Tibial artery (tissue), 4 donors: ENCODE measurements at regions of chr14 and their contacts with region 1.

Region 1: DNA sequence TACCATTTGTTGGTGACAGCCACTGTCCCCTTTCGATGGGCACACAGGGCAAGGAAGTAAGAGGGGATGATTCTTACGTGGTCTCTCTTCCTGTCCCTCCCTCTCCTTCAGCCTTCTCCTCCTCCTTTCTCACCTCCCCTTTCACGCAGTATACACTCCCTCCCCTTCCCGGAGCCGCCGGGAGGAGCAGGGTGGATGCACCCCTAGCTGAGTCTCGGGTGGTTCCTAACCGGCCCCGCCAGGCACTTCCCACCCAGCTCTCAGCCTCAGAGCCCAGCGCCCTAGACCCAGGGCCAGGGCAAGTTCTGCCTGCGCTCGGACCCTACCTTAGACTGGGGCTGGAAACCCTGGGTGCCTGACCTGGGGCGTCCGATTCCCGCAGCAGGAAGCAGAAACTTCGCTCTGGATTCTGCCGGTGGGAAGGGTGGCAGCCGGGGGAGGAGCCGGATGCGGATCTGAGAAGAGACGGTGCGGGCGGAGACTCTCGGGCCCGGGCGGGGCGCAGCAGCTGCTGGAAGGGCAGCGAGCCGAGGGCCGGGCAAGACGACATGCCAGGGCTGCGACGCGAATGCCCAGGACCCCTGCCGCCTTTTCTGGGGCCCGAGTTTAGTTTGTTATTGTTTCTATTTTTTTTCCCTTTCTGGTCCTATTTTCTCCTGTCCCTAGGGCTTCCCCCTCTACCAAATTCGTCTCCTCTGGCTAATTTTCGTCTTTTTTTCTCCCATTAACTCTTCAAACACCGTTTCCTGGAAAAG is at the start of gene TEP1:
- DNase-seq: peak; percentile 92 to 94
- H3K4me3 ChIP-seq: peak within 1 kb of the TSS; percentile 75 to 91
- H3K27ac ChIP-seq: peak within 1 kb of the TSS; percentile 94
- H3K4me1 ChIP-seq: peaks cover 0 to 19% (median 12%) of the 10 kb centered on the region in 4 donors
- H3K27me3 ChIP-seq: no peaks in the 10 kb centered on the region
- CTCF ChIP-seq: peak in 1 of 2 experiments; percentile 8

Region 2: DNA sequence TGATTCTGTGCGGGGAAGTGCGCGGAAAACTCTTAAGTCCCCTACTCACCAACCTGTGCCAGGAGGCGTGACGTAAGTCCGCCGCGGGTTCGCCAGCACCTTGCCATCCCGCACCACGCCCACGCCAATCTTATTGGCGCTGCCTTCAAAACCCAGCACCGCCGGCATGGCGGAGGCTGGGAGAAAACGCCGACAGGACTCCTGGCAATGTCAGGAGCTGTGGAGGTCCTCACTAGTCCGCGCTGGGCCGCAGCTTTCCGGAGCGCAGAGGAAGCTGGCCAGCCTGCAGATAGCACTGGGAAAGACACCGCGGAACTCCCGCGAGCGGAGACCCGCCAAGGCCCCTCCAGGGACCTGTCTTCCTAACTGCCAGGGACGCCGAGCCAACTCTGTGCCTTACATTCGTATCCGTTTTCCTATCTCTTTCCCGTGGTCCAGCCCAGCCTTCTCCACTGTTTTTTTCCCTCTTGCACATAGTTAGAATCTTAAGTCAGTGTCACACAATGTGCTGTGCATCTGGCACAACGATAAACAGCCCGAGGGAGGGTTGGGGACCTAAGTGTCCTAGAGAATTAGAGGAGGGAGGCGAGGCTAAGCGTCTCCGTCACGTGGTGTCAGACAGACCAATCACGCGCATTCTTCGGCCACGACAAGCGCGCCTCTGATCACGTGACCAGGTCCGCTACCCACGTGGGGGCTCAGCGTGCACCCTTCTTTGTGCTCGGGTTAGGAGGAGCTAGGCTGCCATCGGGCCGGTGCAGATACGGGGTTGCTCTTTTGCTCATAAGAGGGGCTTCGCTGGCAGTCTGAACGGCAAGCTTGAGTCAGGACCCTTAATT is 41.5 kb after region 1 on chr14 and contains the starts of genes APEX1 and OSGEP:
- intact Hi-C with region 1: loop called (anchors 5 kb)
- DNase-seq: peak; percentile 99
- H3K4me3 ChIP-seq: peak within 1 kb of the TSS; percentile 71 to 72
- H3K27ac ChIP-seq: peak within 1 kb of the TSS; percentile 84 to 93
- H3K4me1 ChIP-seq: peaks cover 0 to 40% (median 29%) of the 10 kb centered on the region in 4 donors
- H3K27me3 ChIP-seq: no peaks in the 10 kb centered on the region
- CTCF ChIP-seq: no peak